Spleen (tissue), 13 donors: ENCODE measurements at regions of chr1 and their contacts with region 1.

Region 1: GRCh38 chr1:28877132-28877781 is 37.1 kb upstream of the EPB41 start:
- DNase-seq: peak; percentile 91
- H3K4me3 ChIP-seq: no peak overlapping the region
- H3K27ac ChIP-seq: no peak overlapping the region
- H3K4me1 ChIP-seq: peaks cover 0 to 14% (median 7%) of the 10 kb centered on the region in 6 donors
- H3K27me3 ChIP-seq: no peaks in the 10 kb centered on the region
- CTCF ChIP-seq: peak; percentile 87 to 97 (median 94)
- POLR2A ChIP-seq: no peak

Region 2: GRCh38 chr1:28518000-28518744 is 359.1 kb before region 1 on chr1:
- intact Hi-C with region 1: loop called (anchors 10 kb)
- DNase-seq: peak; percentile 98
- H3K4me3 ChIP-seq: peak overlapping the region; percentile 71 to 91 (median 77)
- H3K27ac ChIP-seq: peak overlapping the region; percentile 60 to 90 (median 84)
- H3K4me1 ChIP-seq: peaks cover 9 to 62% (median 30%) of the 10 kb centered on the region in 6 donors
- H3K27me3 ChIP-seq: no peaks in the 10 kb centered on the region
- CTCF ChIP-seq: peak; percentile 96 to 100 (median 99)
- POLR2A ChIP-seq: no peak

Region 3: DNA sequence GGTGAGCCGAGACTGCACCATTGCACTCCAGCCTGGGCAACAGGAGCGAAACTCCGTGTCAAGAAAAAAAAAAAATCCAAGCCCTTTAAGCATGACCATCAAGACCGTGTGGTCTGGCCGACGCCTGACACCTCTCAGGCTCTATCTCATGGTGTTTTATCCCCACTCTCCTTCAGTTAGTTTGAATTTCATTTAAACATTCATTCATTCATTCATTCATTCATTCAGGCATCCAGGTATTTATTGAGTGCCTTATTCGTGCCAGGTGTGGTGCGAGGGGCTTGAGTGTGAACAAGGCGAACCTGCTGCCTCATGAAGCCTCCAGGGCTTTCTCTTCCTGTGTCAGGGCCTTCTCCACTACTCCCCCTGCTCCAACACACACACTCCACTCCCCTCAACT is 87.8 kb before region 1 on chr1:
- intact Hi-C with region 1: loop called (anchors 5 kb)
- DNase-seq: no peak
- H3K4me3 ChIP-seq: no peak overlapping the region
- H3K27ac ChIP-seq: no peak overlapping the region
- H3K4me1 ChIP-seq: peaks cover 0 to 11% (median 6%) of the 10 kb centered on the region in 6 donors
- H3K27me3 ChIP-seq: no peaks in the 10 kb centered on the region
- CTCF ChIP-seq: no peak
- POLR2A ChIP-seq: no peak

Region 4: DNA sequence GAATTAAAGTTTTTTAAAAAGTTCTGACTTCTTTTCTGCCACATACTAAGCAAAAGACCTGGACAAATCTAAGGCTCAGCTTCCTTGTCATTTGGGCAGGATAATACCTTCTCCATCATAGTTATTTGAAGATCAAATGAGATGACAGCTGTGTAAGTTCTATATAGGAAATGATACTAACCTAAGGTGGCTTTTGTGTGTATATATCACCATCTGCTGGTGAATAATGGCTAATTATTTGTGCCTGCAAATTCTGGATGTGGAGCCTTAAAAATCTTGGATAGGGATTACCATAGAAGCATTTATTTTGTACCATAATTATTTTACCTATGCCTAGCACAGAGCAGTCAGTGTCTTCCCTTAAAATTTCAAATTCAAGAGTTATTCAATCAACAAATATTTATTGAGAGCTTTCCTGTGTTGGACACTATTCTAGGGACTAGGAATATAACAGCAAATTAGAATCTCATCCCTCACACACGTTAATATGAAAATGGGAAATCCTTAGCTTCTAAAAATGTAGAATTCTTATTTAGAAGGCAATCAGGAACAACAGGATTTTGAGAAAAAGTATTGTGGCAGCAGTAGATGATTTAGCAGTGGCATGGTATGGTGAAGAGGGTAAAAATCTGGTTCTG is 156.7 kb after region 1 on chr1:
- intact Hi-C with region 1: loop called (anchors 2 kb)
- DNase-seq: no peak
- H3K4me3 ChIP-seq: no peak overlapping the region
- H3K27ac ChIP-seq: no peak overlapping the region
- H3K4me1 ChIP-seq: no peaks in the 10 kb centered on the region
- H3K27me3 ChIP-seq: no peaks in the 10 kb centered on the region
- CTCF ChIP-seq: peak; percentile 39 to 84 (median 71)
- POLR2A ChIP-seq: no peak

Region 5: GRCh38 chr1:29202584-29203340 is 325.5 kb after region 1 on chr1:
- intact Hi-C with region 1: loop called (anchors 2 kb)
- DNase-seq: peak; percentile 96
- H3K4me3 ChIP-seq: no peak overlapping the region
- H3K27ac ChIP-seq: peak overlapping the region in 7 of 8 donors; percentile 52 to 76 (median 68)
- H3K4me1 ChIP-seq: peaks cover 2 to 22% (median 12%) of the 10 kb centered on the region in 6 donors
- H3K27me3 ChIP-seq: no peaks in the 10 kb centered on the region
- CTCF ChIP-seq: peak; percentile 93 to 99 (median 97)
- POLR2A ChIP-seq: no peak